ENCODE measurements at regions of chr17 and their contacts with region 1.

Region 1: GRCh38 chr17:28842282-28843012 is at the start of gene FAM222B:
- DNase-seq: peak; percentile 82 to 95
- ATAC-seq: peak; percentile 96 to 98 (median 97)
- H3K4me3 ChIP-seq: peak within 1 kb of the TSS; percentile 86
- H3K4me3 Mint-ChIP-seq: peak within 1 kb of the TSS; percentile 94
- H3K27ac ChIP-seq: peak within 1 kb of the TSS; percentile 64
- H3K27ac Mint-ChIP-seq: peak within 1 kb of the TSS; percentile 92 to 99
- H3K4me1 ChIP-seq: peaks cover 17% of the 10 kb centered on the region
- H3K4me1 Mint-ChIP-seq: peaks cover 13 to 21% of the 10 kb centered on the region in 2 donors
- H3K27me3 ChIP-seq: no peaks in the 10 kb centered on the region
- H3K27me3 Mint-ChIP-seq: no peaks in the 10 kb centered on the region
- CTCF ChIP-seq: no peak
- total RNA-seq, gene FAM222B: 16.9 to 26.0 (median 20.0) TPM

Region 2: GRCh38 chr17:28777178-28777577 is 65.3 kb before region 1 on chr17:
- intact Hi-C with region 1: no loop called
- DNase-seq: no peak
- ATAC-seq: no peak
- H3K4me3 ChIP-seq: no peak overlapping the region
- H3K4me3 Mint-ChIP-seq: no peak overlapping the region
- H3K27ac ChIP-seq: no peak overlapping the region
- H3K27ac Mint-ChIP-seq: peak overlapping the region; percentile 56 to 78
- H3K4me1 ChIP-seq: no peaks in the 10 kb centered on the region
- H3K4me1 Mint-ChIP-seq: peaks cover 28 to 32% of the 10 kb centered on the region in 2 donors
- H3K27me3 ChIP-seq: no peaks in the 10 kb centered on the region
- H3K27me3 Mint-ChIP-seq: no peaks in the 10 kb centered on the region
- CTCF ChIP-seq: no peak

Region 3: DNA sequence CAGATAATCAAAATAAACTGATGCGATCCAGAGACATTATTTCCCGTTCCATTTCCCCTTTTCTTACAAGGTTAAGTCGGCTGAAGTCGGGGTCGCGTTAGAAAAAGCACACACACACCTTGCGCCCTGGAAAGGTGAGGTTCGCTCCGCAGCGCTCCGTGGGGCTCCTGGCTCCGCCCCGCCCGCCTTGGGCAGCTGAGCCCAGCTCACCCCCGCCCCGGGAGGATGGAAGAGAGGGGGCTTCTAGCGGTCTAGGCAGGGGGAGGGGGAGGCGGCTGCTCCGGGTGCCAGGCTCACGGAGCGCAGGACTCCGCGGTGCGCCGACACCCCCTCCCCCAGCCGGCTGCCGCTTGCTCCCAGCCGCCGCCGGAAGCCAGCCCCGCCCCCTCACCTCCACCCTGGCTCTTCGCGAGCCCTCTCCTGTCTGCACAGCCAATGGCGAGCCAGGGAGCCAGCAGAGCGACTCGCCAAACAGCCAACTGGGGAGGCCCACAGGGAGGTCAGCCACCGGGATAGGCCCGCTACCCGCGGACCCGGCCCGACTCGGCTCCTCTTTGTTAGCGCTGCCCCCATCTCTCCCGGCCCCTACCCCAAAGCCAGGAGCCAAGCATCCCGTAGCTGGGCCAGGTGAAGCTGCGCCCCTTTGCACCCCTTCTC is 30.2 kb before region 1 on chr17:
- intact Hi-C with region 1: loop called (anchors 1 kb)
- DNase-seq: peak; percentile 94 to 97
- ATAC-seq: peak; percentile 99 to 100 (median 99)
- H3K4me3 ChIP-seq: peak overlapping the region; percentile 90
- H3K4me3 Mint-ChIP-seq: peak overlapping the region; percentile 95
- H3K27ac ChIP-seq: peak overlapping the region; percentile 82
- H3K27ac Mint-ChIP-seq: peak overlapping the region; percentile 86 to 91
- H3K4me1 ChIP-seq: no peaks in the 10 kb centered on the region
- H3K4me1 Mint-ChIP-seq: peaks cover 19 to 31% of the 10 kb centered on the region in 2 donors
- H3K27me3 ChIP-seq: no peaks in the 10 kb centered on the region
- H3K27me3 Mint-ChIP-seq: no peaks in the 10 kb centered on the region
- CTCF ChIP-seq: no peak

Region 4: DNA sequence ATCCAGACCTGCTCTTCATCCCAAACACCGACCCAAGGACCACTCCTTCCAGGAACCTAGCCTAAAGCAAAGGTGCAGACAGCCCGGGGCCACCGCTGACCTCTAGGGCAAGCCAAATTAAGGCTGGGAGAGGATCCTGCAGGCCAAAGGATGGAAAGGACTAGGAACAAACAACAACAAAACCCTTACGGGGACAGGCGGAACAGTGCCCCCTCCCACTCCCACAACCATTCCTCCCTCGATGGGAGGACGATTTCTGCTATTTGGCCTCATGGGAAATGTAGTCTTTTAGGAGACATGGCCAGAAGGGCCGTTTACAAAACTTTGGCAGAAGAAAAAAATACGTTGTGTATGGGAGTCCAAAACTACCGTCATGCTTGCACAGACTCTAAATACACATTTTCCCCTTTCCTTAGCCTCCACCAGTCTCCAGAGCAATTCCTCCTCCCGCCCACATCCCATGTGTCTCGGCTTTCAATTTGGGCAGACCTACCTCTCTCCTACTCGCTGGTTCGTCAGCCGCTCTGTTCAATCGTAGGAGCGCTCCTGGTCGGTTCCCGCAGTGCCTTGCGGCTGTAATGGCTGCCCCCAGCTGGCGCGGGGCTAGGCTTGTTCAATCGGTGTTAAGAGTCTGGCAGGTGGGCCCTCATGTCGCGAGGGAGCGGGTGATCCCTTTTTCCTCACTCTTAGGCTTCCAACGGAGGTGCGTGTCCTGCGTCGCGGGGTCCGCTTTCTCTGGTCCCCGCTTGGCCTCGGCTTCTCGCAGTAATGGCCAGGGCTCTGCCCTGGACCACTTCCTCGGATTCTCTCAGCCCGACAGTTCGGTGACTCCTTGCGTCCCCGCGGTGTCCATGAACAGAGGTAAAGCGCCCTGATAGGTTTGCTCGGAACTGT is 12.3 kb after region 1 on chr17 and contains the start of gene ERAL1:
- intact Hi-C with region 1: loop called (anchors 1 kb)
- DNase-seq: peak; percentile 78 to 90
- ATAC-seq: peak; percentile 99
- H3K4me3 ChIP-seq: peak within 1 kb of the TSS; percentile 90
- H3K4me3 Mint-ChIP-seq: peak within 1 kb of the TSS; percentile 98
- H3K27ac ChIP-seq: peak within 1 kb of the TSS; percentile 66
- H3K27ac Mint-ChIP-seq: peak within 1 kb of the TSS; percentile 85 to 92
- H3K4me1 ChIP-seq: peaks cover 13% of the 10 kb centered on the region
- H3K4me1 Mint-ChIP-seq: peaks cover 14% of the 10 kb centered on the region in 2 donors
- H3K27me3 ChIP-seq: no peaks in the 10 kb centered on the region
- H3K27me3 Mint-ChIP-seq: no peaks in the 10 kb centered on the region
- CTCF ChIP-seq: no peak
- total RNA-seq, gene ERAL1: 20.9 to 35.2 (median 27.3) TPM

Region 5: DNA sequence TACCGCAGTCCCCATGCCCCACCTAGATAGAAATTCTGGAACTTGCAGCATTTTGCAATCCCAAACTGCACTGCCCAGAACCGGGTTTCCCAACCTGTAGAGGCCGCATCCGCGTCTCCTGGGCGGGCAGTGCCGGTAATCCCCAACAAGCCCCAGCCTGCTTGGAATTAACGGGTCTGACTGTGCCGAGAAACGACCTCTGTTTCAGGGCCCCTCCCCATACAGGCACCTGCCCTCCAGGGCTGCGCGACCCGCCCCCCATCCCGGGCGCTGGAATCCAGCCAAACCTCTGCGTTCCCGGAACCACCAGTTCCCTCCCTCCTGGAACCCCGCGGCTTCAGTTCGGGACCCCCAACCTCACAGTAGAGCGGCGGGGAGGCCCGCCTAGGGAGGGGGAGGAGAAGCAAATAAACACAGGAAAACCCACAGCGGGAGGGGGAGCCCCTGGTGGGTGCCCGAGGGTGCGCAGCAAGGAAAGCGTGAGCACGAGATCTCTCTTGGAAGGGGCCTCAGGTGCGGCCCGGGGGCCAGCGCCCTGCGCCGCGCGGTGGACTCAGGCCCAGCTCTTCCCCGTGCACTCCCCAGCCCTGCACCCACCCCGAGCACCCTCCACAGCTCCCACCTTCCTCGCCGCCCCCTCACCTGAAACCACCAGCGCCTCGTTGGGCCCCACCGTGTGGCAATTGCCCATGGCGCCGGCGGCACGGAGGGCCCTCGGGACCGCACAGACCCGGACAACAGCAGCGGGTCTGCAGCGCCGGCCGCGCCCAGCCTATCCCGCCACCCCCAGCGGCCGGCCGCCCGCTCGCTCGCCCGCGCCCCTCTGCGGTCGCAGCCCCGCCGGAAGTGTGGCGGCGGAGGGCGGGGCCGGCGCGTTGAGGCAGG is 54.7 kb after region 1 on chr17 and contains the start of gene FLOT2:
- intact Hi-C with region 1: loop called (anchors 10 kb)
- DNase-seq: peak; percentile 61 to 82
- ATAC-seq: peak; percentile 74 to 80 (median 76)
- H3K4me3 ChIP-seq: peak within 1 kb of the TSS; percentile 94
- H3K4me3 Mint-ChIP-seq: peak within 1 kb of the TSS; percentile 90
- H3K27ac ChIP-seq: peak within 1 kb of the TSS; percentile 89
- H3K27ac Mint-ChIP-seq: peak within 1 kb of the TSS; percentile 93 to 97
- H3K4me1 ChIP-seq: peaks cover 71% of the 10 kb centered on the region
- H3K4me1 Mint-ChIP-seq: peaks cover 53 to 65% of the 10 kb centered on the region in 2 donors
- H3K27me3 ChIP-seq: no peaks in the 10 kb centered on the region
- H3K27me3 Mint-ChIP-seq: no peaks in the 10 kb centered on the region
- CTCF ChIP-seq: peak; percentile 50
- total RNA-seq, gene FLOT2: 132 to 152 (median 152) TPM